Activated naive CD4-positive, alpha-beta T cell treated with anti-CD3 and anti-CD28 coated beads for 36 hours (primary cell): ENCODE measurements at regions of chr3 and their contacts with region 1.

Region 1: DNA sequence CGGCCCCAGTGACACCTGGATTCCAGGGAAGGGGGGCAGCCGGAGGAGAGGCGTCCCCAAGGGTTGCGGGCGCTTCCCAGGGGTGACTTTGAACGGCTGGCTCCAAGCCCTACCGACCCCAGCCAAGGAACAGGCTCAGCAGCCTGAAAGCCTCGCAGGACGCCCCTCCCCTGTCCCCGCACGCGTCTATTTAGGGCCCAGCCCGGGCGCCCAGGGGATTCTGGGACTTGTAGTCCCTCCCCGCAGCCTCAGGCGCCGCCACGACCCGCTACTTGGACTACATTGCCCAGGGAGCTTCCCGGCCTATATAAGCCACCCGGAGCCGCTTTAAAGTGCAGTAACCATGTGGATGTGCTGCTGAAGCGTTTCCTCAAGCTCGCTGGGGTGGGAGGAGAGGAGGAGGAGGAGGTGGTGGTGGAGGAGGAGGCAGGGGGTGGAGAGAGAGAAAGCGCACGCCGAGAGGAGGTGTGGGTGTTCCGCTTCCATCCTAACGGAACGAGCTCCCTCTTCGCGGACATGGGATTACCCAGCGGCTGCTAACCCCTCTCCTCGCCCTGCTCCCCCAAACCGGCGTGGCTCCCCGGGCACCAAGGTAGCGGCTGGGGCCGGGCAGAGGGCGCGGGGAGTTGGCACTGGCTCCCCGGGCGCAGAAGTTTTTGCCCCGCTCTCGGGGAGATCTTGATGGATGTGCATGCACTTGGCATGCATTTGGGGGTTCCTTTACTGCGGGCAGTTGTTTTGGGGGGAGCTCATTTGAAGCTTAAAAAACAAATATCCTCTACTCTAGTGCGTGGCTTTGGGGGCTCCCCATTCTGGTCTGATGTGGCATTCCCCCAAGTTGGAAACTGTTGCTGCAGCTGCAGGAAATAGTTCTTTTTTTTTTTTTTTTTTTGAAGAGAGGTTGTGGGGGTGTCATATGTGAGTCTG is at the start of gene ITPR1:
- DNase-seq: peak; percentile 98
- H3K4me3 Mint-ChIP-seq: peak within 1 kb of the TSS; percentile 87
- H3K27ac Mint-ChIP-seq: peak within 1 kb of the TSS; percentile 83
- H3K4me1 Mint-ChIP-seq: peaks cover 37% of the 10 kb centered on the region
- H3K27me3 Mint-ChIP-seq: peaks cover 4% of the 10 kb centered on the region
- total RNA-seq, gene ITPR1: 38.5 to 41.1 TPM

Region 2: DNA sequence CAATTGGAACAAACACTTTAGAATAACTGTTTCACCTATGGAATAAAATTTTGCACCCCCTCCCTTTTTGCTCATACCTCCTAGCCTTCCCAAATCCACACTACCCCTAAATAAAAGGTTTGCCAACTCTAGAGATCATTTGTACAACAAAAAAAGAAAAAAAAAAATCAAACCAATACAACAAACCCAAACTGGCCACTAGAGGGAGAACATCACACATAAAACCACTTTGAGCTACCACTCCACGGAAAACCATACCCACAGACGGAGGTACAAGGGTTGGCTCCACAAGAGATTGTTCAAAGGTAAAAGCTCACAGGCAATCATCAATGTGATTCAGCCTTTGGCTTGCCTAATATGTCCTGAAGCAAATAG is 142.5 kb before region 1 on chr3:
- CTCF ChIA-PET with region 1: interaction called, 13 read pairs
- intact Hi-C with region 1: loop called (anchors 1 kb)
- DNase-seq: peak; percentile 59
- H3K4me3 Mint-ChIP-seq: peak overlapping the region; percentile 42
- H3K27ac Mint-ChIP-seq: peak overlapping the region; percentile 54
- H3K4me1 Mint-ChIP-seq: peaks cover 17% of the 10 kb centered on the region
- H3K27me3 Mint-ChIP-seq: no peaks in the 10 kb centered on the region

Region 3: DNA sequence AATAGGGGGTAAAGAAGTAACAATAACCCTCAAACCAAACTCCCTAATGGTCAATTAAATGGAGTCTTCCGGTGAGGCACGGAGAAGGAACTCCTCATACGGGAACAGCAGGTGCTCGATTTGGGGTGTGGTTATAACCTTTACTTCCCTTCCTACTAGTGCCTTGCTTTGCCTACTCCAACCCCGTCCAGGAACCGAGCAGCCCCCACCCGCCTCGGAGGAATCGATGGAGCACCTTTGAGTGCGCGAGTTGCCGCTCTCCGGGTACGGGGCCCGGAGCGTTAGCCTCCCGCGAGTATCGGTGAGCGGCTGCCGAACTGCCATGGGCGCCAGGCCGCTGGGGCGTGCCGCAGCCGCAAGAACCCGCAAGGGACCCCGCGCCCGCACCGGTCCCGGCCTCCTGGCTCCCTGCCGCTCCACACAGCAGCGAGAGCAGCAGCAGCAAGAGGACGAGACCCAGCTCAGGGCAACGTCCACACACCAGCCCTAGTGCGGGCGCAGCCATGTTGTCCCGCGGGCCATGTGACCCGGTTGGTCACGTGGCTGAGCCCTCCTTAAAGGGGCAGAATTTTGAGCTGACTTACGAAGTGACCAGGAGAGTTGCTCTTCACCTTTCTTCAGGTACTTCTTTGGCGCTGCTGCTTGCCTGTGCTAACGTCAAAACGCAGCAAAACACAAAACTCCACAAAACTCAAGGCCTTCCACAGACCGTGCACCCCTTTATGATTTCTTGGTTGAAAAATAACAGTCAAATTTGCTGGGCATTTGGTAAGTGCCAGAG is 26.3 kb before region 1 on chr3 and contains the start of gene SUMF1:
- CTCF ChIA-PET with region 1: interaction called, 5 read pairs
- intact Hi-C with region 1: loop called (anchors 1 kb)
- DNase-seq: peak; percentile 80
- H3K4me3 Mint-ChIP-seq: peak within 1 kb of the TSS; percentile 82
- H3K27ac Mint-ChIP-seq: peak within 1 kb of the TSS; percentile 78
- H3K4me1 Mint-ChIP-seq: peaks cover 18% of the 10 kb centered on the region
- H3K27me3 Mint-ChIP-seq: no peaks in the 10 kb centered on the region
- total RNA-seq, gene SUMF1: 3.9 to 5.0 TPM

Region 4: GRCh38 chr3:4524088-4525023 is 31.1 kb after region 1 on chr3:
- CTCF ChIA-PET with region 1: interaction called, 17 read pairs
- intact Hi-C with region 1: loop called (anchors 1 kb)
- DNase-seq: no peak
- H3K4me3 Mint-ChIP-seq: no peak overlapping the region
- H3K27ac Mint-ChIP-seq: no peak overlapping the region
- H3K4me1 Mint-ChIP-seq: peaks cover 12% of the 10 kb centered on the region
- H3K27me3 Mint-ChIP-seq: no peaks in the 10 kb centered on the region

Region 5: GRCh38 chr3:4776980-4777581 is 283.8 kb after region 1 on chr3:
- CTCF ChIA-PET with region 1: no interaction called
- intact Hi-C with region 1: loop called (anchors 1 kb)
- DNase-seq: peak; percentile 42
- H3K4me3 Mint-ChIP-seq: peak overlapping the region; percentile 33
- H3K27ac Mint-ChIP-seq: peak overlapping the region; percentile 89
- H3K4me1 Mint-ChIP-seq: peaks cover 34% of the 10 kb centered on the region
- H3K27me3 Mint-ChIP-seq: no peaks in the 10 kb centered on the region

Region 6: GRCh38 chr3:5122030-5122740 is 628.9 kb after region 1 on chr3 and contains the start of gene ARL8B:
- CTCF ChIA-PET with region 1: no interaction called
- intact Hi-C with region 1: loop called (anchors 1 kb)
- DNase-seq: peak; percentile 94
- H3K4me3 Mint-ChIP-seq: peak within 1 kb of the TSS; percentile 90
- H3K27ac Mint-ChIP-seq: peak within 1 kb of the TSS; percentile 90
- H3K4me1 Mint-ChIP-seq: peaks cover 39% of the 10 kb centered on the region
- H3K27me3 Mint-ChIP-seq: no peaks in the 10 kb centered on the region
- total RNA-seq, gene ARL8B: 38.4 to 39.3 TPM